Spleen (tissue), 13 donors: ENCODE measurements at regions of chr11 and their contacts with region 1.

Region 1: DNA sequence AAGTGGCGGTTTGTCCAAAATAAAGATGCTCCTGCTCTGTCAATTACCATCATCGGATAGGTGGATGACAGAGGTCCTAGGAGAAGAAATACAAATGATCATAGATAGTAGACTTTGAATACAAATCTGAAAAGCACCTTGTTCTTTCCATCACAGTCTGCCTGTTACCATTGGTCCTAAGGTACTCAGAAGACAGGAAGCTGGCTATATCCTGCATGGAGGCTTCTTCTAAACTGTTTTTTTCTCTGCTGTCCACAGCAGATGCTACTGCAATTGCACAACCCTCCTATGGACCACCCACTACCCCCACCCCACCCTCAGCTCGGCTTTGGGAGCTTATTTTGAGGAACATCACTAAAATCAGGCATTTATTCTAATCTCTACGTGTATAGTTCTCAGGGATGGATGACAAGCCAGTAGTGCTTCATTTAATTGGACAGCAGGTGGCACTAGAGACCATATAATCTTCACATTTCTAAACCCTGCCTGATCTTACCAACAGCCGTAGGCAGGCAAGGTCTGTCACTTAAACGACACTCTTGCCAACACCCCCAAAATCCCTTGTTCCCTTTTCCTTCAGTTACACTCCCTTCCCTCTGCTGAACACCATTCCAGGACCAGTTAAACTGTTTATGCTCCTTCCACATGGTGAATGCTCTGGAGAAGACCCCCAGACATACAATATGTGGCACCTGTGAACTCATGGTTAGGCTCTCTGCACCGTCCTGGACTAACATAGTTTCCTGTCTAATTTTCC is 6.6 kb upstream of the PTS start:
- DNase-seq: peak; percentile 70
- H3K4me3 ChIP-seq: no peak overlapping the region
- H3K27ac ChIP-seq: no peak overlapping the region
- H3K4me1 ChIP-seq: peaks cover 0 to 8% (median 5%) of the 10 kb centered on the region in 6 donors
- H3K27me3 ChIP-seq: no peaks in the 10 kb centered on the region
- CTCF ChIP-seq: peak; percentile 74 to 94 (median 86)
- POLR2A ChIP-seq: no peak

Region 2: GRCh38 chr11:112280268-112281126 is 60.8 kb after region 1 on chr11:
- intact Hi-C with region 1: loop called (anchors 2 kb)
- DNase-seq: peak; percentile 81
- H3K4me3 ChIP-seq: peak overlapping the region; percentile 38 to 78 (median 49)
- H3K27ac ChIP-seq: peak overlapping the region in 4 of 8 donors; percentile 26 to 69 (median 62)
- H3K4me1 ChIP-seq: peaks cover 0 to 19% (median 8%) of the 10 kb centered on the region in 6 donors
- H3K27me3 ChIP-seq: no peaks in the 10 kb centered on the region
- CTCF ChIP-seq: peak; percentile 44 to 91 (median 69)
- POLR2A ChIP-seq: no peak

Region 3: DNA sequence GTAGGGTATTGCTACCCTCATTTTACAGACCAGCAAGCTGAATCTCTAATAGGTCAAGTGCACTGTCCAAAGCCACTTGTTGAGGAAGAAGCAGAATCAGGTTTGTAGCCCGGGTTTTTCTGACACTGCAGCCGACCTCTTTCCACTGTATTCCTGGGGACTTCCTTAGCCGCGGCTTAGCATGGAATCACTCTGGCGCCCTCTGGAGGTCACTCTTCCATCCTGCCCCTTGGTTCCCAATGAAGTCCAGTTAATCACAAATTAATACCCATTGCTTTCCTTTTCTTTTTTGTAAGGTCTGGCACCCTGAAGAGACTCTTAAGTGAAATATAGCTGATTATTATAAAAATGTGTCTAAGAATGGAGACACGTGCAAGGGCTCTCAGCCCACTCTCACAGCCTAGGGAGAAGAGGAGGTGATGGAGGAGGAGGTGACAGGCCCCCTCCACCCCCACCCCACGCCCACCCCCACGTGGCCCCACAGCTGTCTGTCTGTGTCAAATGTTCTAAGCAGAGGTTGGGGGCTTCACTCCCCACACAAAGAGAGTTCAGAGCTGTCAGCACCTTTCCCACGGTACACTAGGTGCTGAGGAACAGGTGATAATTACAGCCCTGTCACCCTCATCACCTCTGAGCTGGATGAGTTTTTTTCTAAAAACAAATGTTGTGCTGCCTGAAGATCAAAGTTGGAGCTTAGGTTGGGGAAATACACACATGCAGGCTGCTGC is 1313.2 kb after region 1 on chr11:
- intact Hi-C with region 1: loop called (anchors 10 kb)
- DNase-seq: no peak
- H3K4me3 ChIP-seq: no peak overlapping the region
- H3K27ac ChIP-seq: no peak overlapping the region
- H3K4me1 ChIP-seq: peaks cover 0 to 8% (median 0%) of the 10 kb centered on the region in 6 donors
- H3K27me3 ChIP-seq: peaks cover 0 to 16% (median 4%) of the 10 kb centered on the region in 7 donors
- CTCF ChIP-seq: peak; percentile 44 to 88 (median 71)
- POLR2A ChIP-seq: no peak